ENCODE measurements at regions of chrX and their contacts with region 1.

Region 1: DNA sequence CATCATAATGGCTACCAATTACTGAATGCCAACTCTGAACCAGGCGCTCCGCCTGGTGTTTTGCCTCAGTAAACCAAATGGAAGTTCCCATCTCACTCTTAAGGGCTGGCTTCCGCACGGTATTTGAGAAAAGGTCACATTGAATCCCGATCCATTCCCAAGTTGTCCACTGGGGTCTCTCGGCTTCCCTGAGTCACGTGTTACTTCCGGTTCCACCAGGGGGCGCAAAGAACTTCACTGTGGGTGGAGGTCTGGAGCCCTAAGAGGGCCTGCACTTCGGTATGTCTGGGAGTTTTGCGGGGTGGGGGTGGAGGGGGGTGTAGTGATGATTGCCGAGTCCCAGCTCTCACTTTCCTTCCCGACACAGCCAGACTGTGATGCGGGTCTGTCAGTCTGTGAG is 13.4 kb upstream of the NHS start:
- DNase-seq: no peak
- H3K4me3 ChIP-seq: no peak overlapping the region
- H3K27ac ChIP-seq: no peak overlapping the region
- H3K4me1 ChIP-seq: no peaks in the 10 kb centered on the region
- H3K27me3 ChIP-seq: no peaks in the 10 kb centered on the region
- CTCF ChIP-seq: no peak

Region 2: GRCh38 chrX:17187136-17187756 is 174.4 kb before region 1 on chrX:
- intact Hi-C with region 1: no loop called
- DNase-seq: no peak
- H3K4me3 ChIP-seq: no peak overlapping the region
- H3K27ac ChIP-seq: no peak overlapping the region
- H3K4me1 ChIP-seq: no peaks in the 10 kb centered on the region
- H3K27me3 ChIP-seq: no peaks in the 10 kb centered on the region
- CTCF ChIP-seq: no peak

Region 3: GRCh38 chrX:17251877-17252276 is 109.7 kb before region 1 on chrX:
- intact Hi-C with region 1: loop called (anchors 10 kb)
- DNase-seq: no peak
- H3K4me3 ChIP-seq: no peak overlapping the region
- H3K27ac ChIP-seq: no peak overlapping the region
- H3K4me1 ChIP-seq: no peaks in the 10 kb centered on the region
- H3K27me3 ChIP-seq: no peaks in the 10 kb centered on the region
- CTCF ChIP-seq: no peak

Measured in left ventricle myocardium inferior (tissue), 1 donor.